OCI-LY7 (cell line): ENCODE measurements at regions of chr11 and their contacts with region 1.

Region 1: GRCh38 chr11:119666463-119667131 is 62.4 kb downstream of the NECTIN1 start:
- DNase-seq: peak; percentile 71
- H3K4me3 ChIP-seq: no peak overlapping the region
- H3K27ac ChIP-seq: no peak overlapping the region
- H3K4me1 ChIP-seq: peaks cover 5% of the 10 kb centered on the region
- CTCF ChIP-seq: peak; percentile 83

Region 2: GRCh38 chr11:119481021-119481666 is 185.5 kb before region 1 on chr11:
- CTCF ChIA-PET with region 1: no interaction called
- POLR2A ChIA-PET with region 1: no interaction called
- intact Hi-C with region 1: loop called (anchors 5 kb)
- DNase-seq: peak; percentile 58
- H3K4me3 ChIP-seq: no peak overlapping the region
- H3K27ac ChIP-seq: no peak overlapping the region
- H3K4me1 ChIP-seq: no peaks in the 10 kb centered on the region
- CTCF ChIP-seq: peak; percentile 99

Region 3: GRCh38 chr11:119626871-119627270 is 39.7 kb before region 1 on chr11:
- CTCF ChIA-PET with region 1: no interaction called
- POLR2A ChIA-PET with region 1: no interaction called
- intact Hi-C with region 1: no loop called
- DNase-seq: peak; percentile 14
- H3K4me3 ChIP-seq: no peak overlapping the region
- H3K27ac ChIP-seq: no peak overlapping the region
- H3K4me1 ChIP-seq: peaks cover 10% of the 10 kb centered on the region
- CTCF ChIP-seq: no peak

Region 4: DNA sequence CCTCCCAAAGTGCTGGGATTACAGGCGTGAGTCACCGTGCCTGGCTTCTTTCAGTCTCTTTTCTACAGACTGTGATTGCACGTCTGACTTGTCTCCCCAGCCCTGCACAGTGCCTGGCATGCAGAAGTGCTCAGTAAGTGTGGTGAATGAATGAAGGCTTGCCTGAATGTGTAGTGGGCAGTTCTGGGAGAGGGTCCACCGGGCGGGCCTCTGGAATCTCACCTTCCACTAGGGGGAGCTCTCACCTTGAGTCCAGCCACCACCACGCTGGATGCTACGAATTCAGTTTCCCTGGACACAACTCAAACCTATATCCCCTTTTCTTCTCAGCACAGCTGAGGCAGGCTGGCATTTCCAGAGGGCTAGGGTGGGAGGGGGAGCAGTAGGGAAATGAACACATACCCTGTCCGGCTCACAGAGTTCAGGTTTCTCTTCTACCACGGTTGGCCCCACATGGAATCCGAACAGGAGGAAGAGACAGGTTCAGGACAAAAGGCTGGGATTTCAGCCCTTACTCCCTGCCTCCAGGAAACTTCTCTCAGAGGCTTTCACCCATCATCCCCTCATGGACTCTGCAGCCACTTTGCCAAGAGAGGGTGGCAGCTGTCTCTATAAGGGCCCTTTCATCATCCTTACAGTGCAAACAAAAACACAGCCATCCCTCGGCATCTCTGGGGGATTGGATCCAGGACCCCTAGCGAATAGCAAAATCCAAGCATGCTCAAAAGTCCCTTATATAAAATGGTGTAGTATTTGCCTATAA is 24.4 kb before region 1 on chr11:
- CTCF ChIA-PET with region 1: no interaction called
- POLR2A ChIA-PET with region 1: no interaction called
- intact Hi-C with region 1: no loop called
- DNase-seq: peak; percentile 55
- H3K4me3 ChIP-seq: no peak overlapping the region
- H3K27ac ChIP-seq: no peak overlapping the region
- H3K4me1 ChIP-seq: no peaks in the 10 kb centered on the region
- CTCF ChIP-seq: peak; percentile 80

Region 5: DNA sequence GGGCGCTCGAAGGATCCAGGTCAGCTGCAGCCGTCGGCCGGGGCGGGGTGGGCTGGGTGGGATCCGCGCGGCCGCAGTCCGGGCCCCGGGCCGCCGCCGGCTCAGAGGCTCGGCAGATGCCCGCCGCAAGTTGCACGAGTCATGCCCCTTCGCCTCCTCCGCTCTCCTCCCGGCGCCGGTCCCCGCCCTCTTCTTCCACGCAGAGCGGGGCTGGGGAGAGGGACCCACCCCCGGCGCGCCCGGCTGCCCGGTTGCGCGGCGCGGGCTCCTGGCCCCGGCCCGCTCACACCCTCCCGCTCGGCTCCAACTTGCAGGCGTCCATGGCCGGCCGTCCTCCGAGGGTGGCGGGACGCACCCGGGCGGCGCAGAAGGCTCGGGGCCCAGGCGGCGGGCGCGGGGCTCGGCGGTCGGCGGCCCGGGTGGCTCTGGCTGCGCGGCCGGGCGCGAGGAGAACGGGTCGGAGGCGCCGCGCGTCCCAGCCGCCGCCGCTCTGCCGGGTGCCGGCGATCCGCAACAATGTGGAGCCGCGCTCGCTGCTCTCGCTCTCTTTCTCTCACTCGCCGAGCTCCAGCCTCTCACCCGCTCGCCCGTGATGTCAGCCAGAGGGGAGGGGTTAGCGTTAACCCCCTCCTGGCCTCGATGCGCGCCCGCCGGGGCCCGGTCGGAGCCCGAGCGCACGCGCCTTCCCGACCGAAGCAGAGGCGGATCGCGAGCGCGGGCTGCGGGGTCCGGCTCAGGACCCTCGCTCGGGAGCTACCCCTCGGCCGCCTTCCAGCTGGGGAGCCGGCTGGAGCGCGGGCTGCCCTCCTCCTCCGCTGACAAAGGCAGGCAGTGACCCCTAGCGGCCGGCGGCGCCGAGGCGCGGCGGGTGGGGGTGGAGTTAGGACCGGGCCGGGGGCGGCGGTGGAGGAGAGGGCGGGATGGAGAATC is 62.3 kb after region 1 on chr11 and contains the start of gene NECTIN1:
- CTCF ChIA-PET with region 1: interaction called, 3 read pairs
- POLR2A ChIA-PET with region 1: interaction called, 5 read pairs
- intact Hi-C with region 1: loop called (anchors 1 kb)
- DNase-seq: peak; percentile 88
- H3K4me3 ChIP-seq: peak within 1 kb of the TSS; percentile 69
- H3K27ac ChIP-seq: peak within 1 kb of the TSS; percentile 6
- H3K4me1 ChIP-seq: peaks cover 30% of the 10 kb centered on the region
- CTCF ChIP-seq: peak; percentile 95
- total RNA-seq, gene NECTIN1: 2.3 and 5.8 TPM in 2 replicates

Region 6: GRCh38 chr11:119741369-119742262 is 75.0 kb after region 1 on chr11:
- CTCF ChIA-PET with region 1: no interaction called
- POLR2A ChIA-PET with region 1: interaction called, 4 read pairs
- intact Hi-C with region 1: loop called (anchors 1 kb)
- DNase-seq: peak; percentile 50
- H3K4me3 ChIP-seq: no peak overlapping the region
- H3K27ac ChIP-seq: no peak overlapping the region
- H3K4me1 ChIP-seq: no peaks in the 10 kb centered on the region
- CTCF ChIP-seq: peak; percentile 83

Region 7: DNA sequence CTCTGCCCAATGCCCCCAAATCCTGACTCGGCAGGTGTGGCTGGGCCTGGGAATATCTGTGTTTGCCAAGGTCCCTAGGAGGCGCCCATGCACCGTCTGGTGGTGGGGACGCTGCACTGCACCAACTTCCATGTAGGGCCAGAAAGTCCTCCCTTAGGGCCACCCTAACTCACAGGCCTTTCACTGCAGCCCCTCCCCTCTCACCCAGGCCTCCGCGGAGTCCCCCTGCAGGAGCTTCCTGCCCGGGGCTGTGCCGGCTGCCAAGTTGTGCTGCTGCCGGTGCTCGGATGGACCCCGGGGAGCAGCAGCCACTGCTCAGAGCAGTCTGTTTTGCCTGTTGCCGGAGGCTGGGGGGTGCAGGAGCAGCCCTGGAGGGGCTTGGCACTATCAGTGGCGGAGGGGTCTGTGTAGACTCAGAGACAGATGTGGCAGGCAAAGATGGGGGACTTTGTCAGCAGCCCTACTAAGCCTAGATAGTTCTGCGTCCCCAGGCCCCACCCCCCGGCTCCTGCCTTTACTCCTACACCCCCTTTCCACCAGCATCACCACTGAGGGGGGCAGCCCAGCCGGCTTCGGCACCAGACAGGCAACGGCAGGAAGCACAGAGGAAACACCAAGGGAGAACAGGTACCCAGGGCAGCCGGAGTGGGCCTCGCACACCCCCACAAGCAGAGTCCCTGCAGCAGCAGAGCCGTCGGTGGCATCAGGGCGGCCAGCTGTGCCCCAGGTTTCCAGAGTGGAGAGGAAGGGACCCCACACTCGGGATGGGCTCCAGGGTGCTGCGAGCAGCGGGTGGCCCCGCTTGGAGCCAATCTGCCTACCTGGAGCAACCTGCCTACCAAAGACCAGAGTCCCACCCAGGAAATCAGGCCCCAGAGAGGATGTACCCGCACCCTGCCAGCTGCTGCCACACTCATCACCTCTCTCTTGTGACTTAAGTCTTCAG is 347.0 kb after region 1 on chr11:
- CTCF ChIA-PET with region 1: no interaction called
- POLR2A ChIA-PET with region 1: no interaction called
- intact Hi-C with region 1: loop called (anchors 5 kb)
- DNase-seq: peak; percentile 5
- H3K4me3 ChIP-seq: no peak overlapping the region
- H3K27ac ChIP-seq: no peak overlapping the region
- H3K4me1 ChIP-seq: no peaks in the 10 kb centered on the region
- CTCF ChIP-seq: peak; percentile 60

Region 8: GRCh38 chr11:120079750-120080490 is 413.3 kb after region 1 on chr11:
- CTCF ChIA-PET with region 1: no interaction called
- POLR2A ChIA-PET with region 1: no interaction called
- intact Hi-C with region 1: loop called (anchors 10 kb)
- DNase-seq: peak; percentile 15
- H3K4me3 ChIP-seq: no peak overlapping the region
- H3K27ac ChIP-seq: no peak overlapping the region
- H3K4me1 ChIP-seq: no peaks in the 10 kb centered on the region
- CTCF ChIP-seq: peak; percentile 72

Region 9: GRCh38 chr11:120108154-120108865 is 441.7 kb after region 1 on chr11:
- CTCF ChIA-PET with region 1: interaction called, 3 read pairs
- POLR2A ChIA-PET with region 1: no interaction called
- intact Hi-C with region 1: loop called (anchors 1 kb)
- DNase-seq: peak; percentile 63
- H3K4me3 ChIP-seq: no peak overlapping the region
- H3K27ac ChIP-seq: no peak overlapping the region
- H3K4me1 ChIP-seq: no peaks in the 10 kb centered on the region
- CTCF ChIP-seq: peak; percentile 96